WTC11 (cell line): ENCODE measurements at regions of chr19 and their contacts with region 1.

Region 1: DNA sequence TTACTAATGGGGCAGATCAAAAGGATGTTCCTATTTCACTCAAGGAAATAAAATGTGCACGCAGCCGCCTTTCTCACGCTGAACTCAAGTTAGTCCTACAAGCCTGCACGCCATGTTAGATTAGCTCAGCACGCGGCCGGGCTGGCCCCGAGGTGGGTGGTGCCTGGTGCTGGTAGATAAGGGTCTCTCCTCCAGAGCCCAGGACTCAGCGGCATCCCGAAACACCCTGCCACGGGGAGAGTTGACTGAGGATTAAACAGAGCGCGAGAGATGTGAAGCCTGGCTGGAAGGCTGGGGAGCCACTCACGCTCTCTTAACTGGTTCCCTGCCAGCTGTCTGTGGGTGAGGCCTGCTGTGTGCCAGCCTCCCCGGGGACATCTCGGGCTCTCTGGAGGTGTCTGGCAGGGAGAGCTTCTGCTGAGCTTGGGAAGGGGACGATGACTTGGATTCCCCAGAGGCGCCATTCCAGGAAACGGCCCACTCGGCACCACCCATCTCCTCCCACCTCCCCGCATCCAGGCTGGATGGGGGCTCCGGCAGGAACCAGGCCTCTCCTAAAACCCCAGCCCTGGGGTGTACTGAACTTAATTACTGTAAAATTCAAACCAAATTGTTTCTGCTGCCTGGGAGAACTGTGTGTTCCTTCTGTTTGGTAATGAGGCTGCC is 122.2 kb downstream of the KDM4B start:
- DNase-seq: no peak
- ATAC-seq: no peak
- H3K4me3 Mint-ChIP-seq: no peak overlapping the region
- H3K27ac Mint-ChIP-seq: peak overlapping the region; percentile 84
- H3K4me1 Mint-ChIP-seq: peaks cover 4% of the 10 kb centered on the region; the same call in 1 of the 2 replicates
- H3K27me3 Mint-ChIP-seq: no peaks in the 10 kb centered on the region
- CTCF ChIP-seq: no peak

Region 2: GRCh38 chr19:4968462-4969291 is 122.5 kb before region 1 on chr19 and contains the start of gene KDM4B:
- CTCF ChIA-PET with region 1: no interaction called
- POLR2A ChIA-PET with region 1: no interaction called
- DNase-seq: peak; percentile 99
- ATAC-seq: peak; percentile 94
- H3K4me3 Mint-ChIP-seq: peak within 1 kb of the TSS; percentile 96
- H3K27ac Mint-ChIP-seq: peak within 1 kb of the TSS; percentile 83
- H3K4me1 Mint-ChIP-seq: peaks cover 42% of the 10 kb centered on the region
- H3K27me3 Mint-ChIP-seq: no peaks in the 10 kb centered on the region
- CTCF ChIP-seq: no peak
- total RNA-seq, gene KDM4B: 43.2 to 56.0 TPM (median 53.1 TPM) in 3 replicates

Region 3: DNA sequence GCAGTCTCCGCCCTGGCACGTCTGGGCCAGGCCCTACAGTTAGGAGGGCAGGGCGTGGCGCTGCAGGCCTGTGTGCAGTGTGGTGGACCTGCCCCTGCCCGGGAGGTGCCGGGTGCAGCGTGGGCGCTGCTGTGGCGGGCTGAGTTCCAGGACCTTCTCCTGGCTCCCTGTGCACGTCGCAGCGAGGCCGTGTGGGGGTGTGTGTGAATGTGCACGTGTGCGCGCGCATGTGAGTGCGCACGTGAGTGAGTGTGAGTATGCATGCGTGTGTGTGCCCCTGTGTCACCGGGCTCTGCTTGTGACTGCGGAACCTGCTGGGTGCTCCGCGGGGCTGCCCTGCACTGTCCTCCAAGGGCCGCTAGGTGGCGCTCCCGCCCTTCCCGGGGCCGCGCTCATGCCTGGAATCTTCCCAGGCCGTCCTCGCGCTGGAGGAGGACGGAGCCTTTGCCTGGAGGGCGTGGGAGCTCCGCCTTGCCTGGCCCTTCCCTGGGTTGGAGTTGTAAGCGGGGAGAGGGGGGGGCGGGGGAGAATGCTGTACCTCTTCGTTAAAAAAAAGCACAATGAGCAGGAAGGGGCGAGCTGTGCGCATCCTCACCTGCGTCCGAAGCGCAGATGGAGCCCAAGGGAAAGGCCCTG is 42.9 kb before region 1 on chr19:
- CTCF ChIA-PET with region 1: interaction called, 65 read pairs
- POLR2A ChIA-PET with region 1: interaction called, 3 read pairs
- DNase-seq: peak; percentile 92
- ATAC-seq: peak; percentile 88
- H3K4me3 Mint-ChIP-seq: no peak overlapping the region
- H3K27ac Mint-ChIP-seq: no peak overlapping the region
- H3K4me1 Mint-ChIP-seq: no peaks in the 10 kb centered on the region
- H3K27me3 Mint-ChIP-seq: no peaks in the 10 kb centered on the region
- CTCF ChIP-seq: peak; percentile 99

Region 4: GRCh38 chr19:5103061-5103701 is 12.0 kb after region 1 on chr19:
- CTCF ChIA-PET with region 1: interaction called, 48 read pairs
- POLR2A ChIA-PET with region 1: no interaction called
- DNase-seq: no peak
- ATAC-seq: no peak
- H3K4me3 Mint-ChIP-seq: no peak overlapping the region
- H3K27ac Mint-ChIP-seq: no peak overlapping the region
- H3K4me1 Mint-ChIP-seq: no peaks in the 10 kb centered on the region
- H3K27me3 Mint-ChIP-seq: no peaks in the 10 kb centered on the region
- CTCF ChIP-seq: no peak

Region 5: DNA sequence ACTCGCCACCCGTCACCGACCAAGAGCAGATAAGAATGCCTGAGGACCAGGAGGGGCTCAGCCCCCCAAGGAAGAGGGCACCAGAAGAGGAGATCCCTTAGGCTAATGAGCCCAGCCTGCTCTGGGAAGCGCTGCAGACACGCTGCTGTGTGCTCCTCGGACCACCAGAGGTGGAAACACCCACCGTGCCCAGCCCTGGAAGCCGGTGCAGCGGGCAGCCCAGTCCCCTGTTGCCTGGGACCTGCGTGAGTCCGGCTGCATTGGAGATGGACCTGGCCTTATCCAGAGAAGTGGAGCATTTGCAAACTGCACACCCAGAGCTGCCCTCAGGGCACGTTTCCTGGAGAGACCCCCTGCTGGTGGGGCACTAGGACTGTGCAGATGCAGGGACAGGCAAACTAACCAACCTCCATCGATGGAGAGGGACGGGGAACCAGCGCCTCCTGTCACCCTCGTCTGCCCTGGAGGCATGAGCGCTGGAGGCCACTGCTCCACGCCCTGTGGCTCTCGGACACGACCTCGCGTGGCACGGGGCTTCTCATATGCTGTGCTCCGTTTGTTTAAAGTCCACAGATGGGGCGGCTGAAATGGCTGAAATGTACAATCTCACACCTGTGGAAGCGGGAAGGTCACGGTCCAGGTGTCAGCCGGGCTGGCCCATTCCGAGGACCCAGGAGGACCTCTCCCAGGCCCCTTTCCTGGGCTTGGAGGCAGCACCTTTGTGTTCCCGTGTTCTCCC is 31.7 kb after region 1 on chr19:
- CTCF ChIA-PET with region 1: interaction called, 36 read pairs
- POLR2A ChIA-PET with region 1: no interaction called
- DNase-seq: no peak
- ATAC-seq: no peak
- H3K4me3 Mint-ChIP-seq: no peak overlapping the region
- H3K27ac Mint-ChIP-seq: peak overlapping the region; percentile 86
- H3K4me1 Mint-ChIP-seq: peaks cover 51% of the 10 kb centered on the region
- H3K27me3 Mint-ChIP-seq: no peaks in the 10 kb centered on the region
- CTCF ChIP-seq: no peak

Region 6: GRCh38 chr19:5138606-5139582 is 47.7 kb after region 1 on chr19:
- CTCF ChIA-PET with region 1: interaction called, 21 read pairs
- POLR2A ChIA-PET with region 1: no interaction called
- DNase-seq: no peak
- ATAC-seq: no peak
- H3K4me3 Mint-ChIP-seq: no peak overlapping the region
- H3K27ac Mint-ChIP-seq: no peak overlapping the region
- H3K4me1 Mint-ChIP-seq: no peaks in the 10 kb centered on the region
- H3K27me3 Mint-ChIP-seq: no peaks in the 10 kb centered on the region
- CTCF ChIP-seq: no peak

Region 7: DNA sequence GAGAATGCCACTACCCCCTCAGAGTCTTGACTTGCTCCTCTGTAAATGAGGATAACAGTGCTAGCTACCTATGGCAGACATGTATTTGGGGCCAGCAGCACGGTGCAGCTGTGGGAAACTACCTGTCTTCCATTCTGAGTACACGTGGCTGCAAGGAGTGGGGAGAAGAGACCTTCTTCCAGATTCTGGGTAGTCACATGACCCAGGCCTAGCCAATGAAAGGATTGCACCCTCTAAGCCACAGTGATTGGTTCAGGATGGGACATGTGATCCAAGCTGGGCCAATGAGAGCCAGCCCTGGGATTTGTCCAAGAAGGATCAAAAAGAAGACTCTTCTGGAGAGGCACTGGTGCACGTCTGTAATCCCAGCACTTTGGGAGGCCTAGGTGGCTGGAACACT is 369.6 kb after region 1 on chr19:
- CTCF ChIA-PET with region 1: no interaction called
- POLR2A ChIA-PET with region 1: no interaction called
- DNase-seq: no peak
- ATAC-seq: no peak
- H3K4me3 Mint-ChIP-seq: no peak overlapping the region
- H3K27ac Mint-ChIP-seq: no peak overlapping the region
- H3K4me1 Mint-ChIP-seq: no peaks in the 10 kb centered on the region
- H3K27me3 Mint-ChIP-seq: peaks cover 11% of the 10 kb centered on the region
- CTCF ChIP-seq: no peak